Uterus (tissue), 4 donors: ENCODE measurements at regions of chr10 and their contacts with region 1.

Region 1: GRCh38 chr10:114304017-114304570 is 65.0 kb downstream of the VWA2 start:
- DNase-seq: peak; percentile 88 to 90
- H3K4me3 ChIP-seq: peak overlapping the region; percentile 6 to 14
- H3K27ac ChIP-seq: peak overlapping the region; percentile 52 to 69
- H3K4me1 ChIP-seq: peaks cover 0 to 7% of the 10 kb centered on the region in 2 donors
- H3K27me3 ChIP-seq: no peaks in the 10 kb centered on the region
- CTCF ChIP-seq: peak; percentile 81 to 88 (median 85)
- POLR2A ChIP-seq: no peak

Region 2: DNA sequence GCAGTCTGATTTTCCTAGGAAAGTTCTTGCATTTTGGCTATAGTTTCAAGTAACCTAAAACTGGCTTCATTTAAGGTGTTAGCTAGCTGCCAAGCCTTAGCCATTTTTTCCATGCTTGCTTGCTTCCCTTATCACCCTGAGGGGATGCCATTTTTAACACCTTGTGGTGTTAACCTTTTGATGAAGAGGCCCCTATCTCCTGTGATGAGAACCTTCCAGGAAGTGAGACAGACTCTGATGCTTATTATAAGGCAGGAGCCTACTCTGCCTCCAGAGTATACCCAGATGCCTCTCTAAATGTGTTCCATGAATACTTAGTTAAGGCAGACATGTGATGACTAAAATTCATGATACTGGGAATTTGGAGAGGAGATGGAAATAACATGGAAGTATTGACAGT is 70.0 kb before region 1 on chr10:
- intact Hi-C with region 1: no loop called
- DNase-seq: no peak
- H3K4me3 ChIP-seq: no peak overlapping the region
- H3K27ac ChIP-seq: no peak overlapping the region
- H3K4me1 ChIP-seq: peaks cover 0 to under 1% of the 10 kb centered on the region in 2 donors
- H3K27me3 ChIP-seq: peaks cover under 1 to 6% of the 10 kb centered on the region in 2 donors
- CTCF ChIP-seq: no peak
- POLR2A ChIP-seq: no peak

Region 3: DNA sequence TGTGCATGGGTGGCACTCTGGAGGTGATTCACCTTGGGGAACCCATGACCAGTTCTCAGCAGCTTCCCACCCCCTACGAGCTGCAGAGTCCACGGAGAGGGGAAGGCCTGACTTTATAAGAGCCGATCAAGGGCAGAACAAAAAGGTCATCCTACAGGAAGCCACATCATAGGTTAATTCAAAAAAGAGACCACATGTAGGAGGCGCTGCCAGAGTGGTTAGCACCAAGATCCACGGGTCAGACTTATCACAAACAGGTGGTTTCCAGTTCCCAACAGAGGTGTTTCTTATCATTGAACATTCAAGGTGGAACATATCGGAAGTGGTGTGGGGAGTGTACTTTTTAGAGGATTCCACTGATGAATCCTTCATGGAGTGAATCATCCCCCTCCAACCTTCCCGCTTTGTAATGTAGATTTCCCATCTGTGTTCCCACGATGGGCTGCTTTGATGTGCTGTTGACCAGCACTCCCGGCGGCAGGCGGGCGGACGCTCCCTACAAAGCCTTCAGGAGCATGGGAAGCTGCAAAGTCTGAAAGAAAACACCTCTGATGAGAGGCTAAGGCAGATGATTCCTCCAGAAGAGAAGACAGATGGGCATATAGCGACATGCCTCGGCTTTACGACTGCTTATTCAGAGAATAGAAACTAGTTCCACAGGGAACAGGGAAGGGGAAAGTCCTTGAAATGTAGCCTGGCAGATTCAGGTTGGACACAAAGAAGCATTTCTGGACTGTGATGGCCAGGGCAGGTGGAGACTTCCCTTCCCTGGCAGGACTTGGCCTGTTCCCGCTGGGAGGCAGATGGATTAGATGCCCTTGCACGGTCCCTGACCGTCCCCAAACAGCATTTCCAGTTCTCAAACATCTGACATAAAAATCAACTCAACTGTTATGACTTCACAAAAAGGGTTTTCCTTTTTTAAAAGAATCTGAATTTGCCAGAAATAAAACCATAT is 33.7 kb after region 1 on chr10:
- intact Hi-C with region 1: no loop called
- DNase-seq: no peak
- H3K4me3 ChIP-seq: no peak overlapping the region
- H3K27ac ChIP-seq: no peak overlapping the region
- H3K4me1 ChIP-seq: peaks cover 0 to 5% of the 10 kb centered on the region in 2 donors
- H3K27me3 ChIP-seq: no peaks in the 10 kb centered on the region
- CTCF ChIP-seq: no peak
- POLR2A ChIP-seq: no peak

Region 4: DNA sequence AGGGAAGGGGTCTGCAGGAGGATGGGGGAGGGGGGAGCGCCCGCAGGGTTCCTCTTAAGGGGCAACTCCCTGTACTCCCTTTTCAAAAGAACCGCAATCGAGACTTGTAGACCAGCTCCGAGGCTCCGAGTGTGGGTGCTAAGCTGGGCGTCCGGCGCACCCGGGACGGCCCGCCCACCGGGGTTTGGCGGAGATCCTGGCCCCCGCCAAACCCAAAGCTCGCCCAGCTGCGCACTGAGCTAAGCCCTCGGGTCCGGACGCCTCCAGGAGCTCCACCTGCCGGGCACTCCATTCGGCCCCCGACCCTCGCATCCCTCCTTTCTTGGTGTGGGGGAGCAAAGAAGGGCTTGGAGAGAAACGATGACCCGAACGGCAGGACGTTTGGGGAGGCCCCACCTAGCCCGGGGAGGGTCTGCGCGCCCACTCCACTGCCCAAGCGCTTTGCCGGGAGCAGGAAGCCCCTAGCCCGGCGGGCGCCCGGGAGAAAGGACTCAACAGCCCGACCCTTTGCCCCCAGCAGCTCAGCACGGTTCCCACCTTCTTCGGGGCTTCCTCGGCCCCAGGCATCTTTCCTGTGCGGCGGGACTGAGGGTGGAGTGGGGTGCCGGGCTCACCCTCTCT is 99.6 kb after region 1 on chr10:
- intact Hi-C with region 1: loop called (anchors 10 kb)
- DNase-seq: peak; percentile 59 to 67
- H3K4me3 ChIP-seq: peak overlapping the region; percentile 62 to 79
- H3K27ac ChIP-seq: peak overlapping the region; percentile 84 to 95
- H3K4me1 ChIP-seq: peaks cover 11 to 12% of the 10 kb centered on the region in 2 donors
- H3K27me3 ChIP-seq: no peaks in the 10 kb centered on the region
- CTCF ChIP-seq: peak; percentile 33 to 43 (median 38)
- POLR2A ChIP-seq: no peak

Region 5: GRCh38 chr10:114437456-114438292 is 133.6 kb after region 1 on chr10:
- intact Hi-C with region 1: loop called (anchors 10 kb)
- DNase-seq: no peak
- H3K4me3 ChIP-seq: no peak overlapping the region
- H3K27ac ChIP-seq: no peak overlapping the region
- H3K4me1 ChIP-seq: no peaks in the 10 kb centered on the region
- H3K27me3 ChIP-seq: no peaks in the 10 kb centered on the region
- CTCF ChIP-seq: peak; percentile 21 to 49 (median 43)
- POLR2A ChIP-seq: no peak